GM12878 (cell line): ENCODE measurements at regions of chr14 and their contacts with region 1.

Region 1: GRCh38 chr14:49767562-49768300 is at the start of gene KLHDC2:
- DNase-seq: no peak
- ATAC-seq: peak; percentile 94
- H3K4me3 ChIP-seq: peak within 1 kb of the TSS; percentile 93
- H3K27ac ChIP-seq: peak within 1 kb of the TSS; percentile 93
- H3K4me1 ChIP-seq: peaks cover 7% of the 10 kb centered on the region
- H3K27me3 ChIP-seq: no peaks in the 10 kb centered on the region
- CTCF ChIP-seq: peak in 1 of 3 experiments; percentile 54; a peak in 2 of 6 replicates
- EP300 ChIP-seq: no peak
- POLR2A ChIP-seq: peak; percentile 81
- RAD21 ChIP-seq: no peak
- polyA plus RNA-seq, gene KLHDC2: 6.0 to 13.3 TPM

Region 2: DNA sequence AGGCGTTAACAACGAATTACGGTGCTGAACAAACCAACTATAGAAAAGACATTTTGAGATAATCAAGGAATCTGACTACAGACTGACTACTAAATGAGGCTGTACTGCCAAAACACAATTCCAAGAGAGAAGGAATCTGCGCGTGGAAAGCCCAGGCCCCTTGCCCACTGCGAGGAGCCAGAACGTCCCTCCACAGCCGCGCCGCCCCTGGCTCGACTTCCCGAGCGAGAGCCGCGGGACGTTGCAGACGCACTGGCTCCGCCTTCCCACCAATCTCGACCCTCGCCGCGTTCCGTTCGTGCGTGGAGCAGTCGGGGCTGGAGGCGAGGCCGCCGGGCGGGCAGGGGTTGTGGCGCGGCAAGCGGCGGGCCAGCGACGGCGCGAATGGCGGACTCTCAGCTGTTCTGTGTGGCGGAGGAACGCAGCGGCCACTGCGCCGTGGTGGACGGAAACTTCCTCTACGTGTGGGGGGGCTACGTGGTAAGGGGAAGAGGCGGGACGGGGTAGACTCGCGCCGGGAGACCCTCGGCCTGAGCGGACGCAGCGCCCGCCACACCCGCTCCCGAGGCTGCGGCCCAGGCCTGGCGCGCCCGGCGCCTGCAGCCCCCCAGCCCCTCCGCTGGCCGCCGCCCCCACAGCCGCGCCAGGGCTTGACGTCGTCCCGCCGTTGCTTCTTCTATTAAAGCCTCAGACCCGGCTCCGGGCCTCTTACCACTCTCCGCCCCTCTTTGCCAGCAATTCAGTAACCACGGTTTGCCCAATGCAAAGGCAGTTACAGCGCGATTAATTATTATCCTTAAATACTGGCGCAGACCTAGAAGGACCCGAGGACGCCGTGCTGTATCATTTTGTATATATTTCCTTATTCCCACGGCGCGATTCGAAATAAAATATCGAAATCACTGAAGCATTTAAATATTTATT is 74.7 kb before region 1 on chr14 and contains the start of gene KLHDC1:
- CTCF ChIA-PET with region 1: interaction called, 5 read pairs
- POLR2A ChIA-PET with region 1: interaction called, 9 read pairs
- RAD21 ChIA-PET with region 1: interaction called, 4 read pairs
- SMC1A ChIA-PET with region 1: interaction called, 4 read pairs
- in situ Hi-C with region 1: no loop called
- intact Hi-C with region 1: loop called (anchors 2 kb)
- DNase-seq: no peak
- ATAC-seq: peak; percentile 76
- H3K4me3 ChIP-seq: peak within 1 kb of the TSS; percentile 62
- H3K27ac ChIP-seq: peak within 1 kb of the TSS; percentile 33; the same call in 1 of the 2 replicates
- H3K4me1 ChIP-seq: peaks cover 4% of the 10 kb centered on the region
- H3K27me3 ChIP-seq: no peaks in the 10 kb centered on the region
- CTCF ChIP-seq: no peak
- EP300 ChIP-seq: no peak
- POLR2A ChIP-seq: peak; percentile 96
- RAD21 ChIP-seq: no peak
- polyA plus RNA-seq, gene KLHDC1: 0.22 to 0.35 TPM

Region 3: GRCh38 chr14:49778421-49778820 is 10.7 kb after region 1 on chr14:
- CTCF ChIA-PET with region 1: interaction called, 7 read pairs
- POLR2A ChIA-PET with region 1: no interaction called
- RAD21 ChIA-PET with region 1: no interaction called
- SMC1A ChIA-PET with region 1: interaction called, 18 read pairs
- in situ Hi-C with region 1: no loop called
- intact Hi-C with region 1: no loop called
- DNase-seq: no peak
- ATAC-seq: no peak
- H3K4me3 ChIP-seq: no peak overlapping the region
- H3K27ac ChIP-seq: no peak overlapping the region
- H3K4me1 ChIP-seq: no peaks in the 10 kb centered on the region
- H3K27me3 ChIP-seq: no peaks in the 10 kb centered on the region
- CTCF ChIP-seq: no peak
- EP300 ChIP-seq: no peak
- POLR2A ChIP-seq: no peak
- RAD21 ChIP-seq: no peak

Region 4: GRCh38 chr14:50432131-50432530 is 664.4 kb after region 1 on chr14:
- CTCF ChIA-PET with region 1: no interaction called
- POLR2A ChIA-PET with region 1: no interaction called
- RAD21 ChIA-PET with region 1: no interaction called
- SMC1A ChIA-PET with region 1: no interaction called
- in situ Hi-C with region 1: no loop called
- intact Hi-C with region 1: no loop called
- DNase-seq: no peak
- ATAC-seq: no peak
- H3K4me3 ChIP-seq: no peak overlapping the region
- H3K27ac ChIP-seq: no peak overlapping the region
- H3K4me1 ChIP-seq: no peaks in the 10 kb centered on the region
- H3K27me3 ChIP-seq: no peaks in the 10 kb centered on the region
- CTCF ChIP-seq: no peak
- EP300 ChIP-seq: no peak
- POLR2A ChIP-seq: no peak
- RAD21 ChIP-seq: no peak